HEK293 (cell line): ENCODE measurements at regions of chr19 and their contacts with region 1.

Region 1: DNA sequence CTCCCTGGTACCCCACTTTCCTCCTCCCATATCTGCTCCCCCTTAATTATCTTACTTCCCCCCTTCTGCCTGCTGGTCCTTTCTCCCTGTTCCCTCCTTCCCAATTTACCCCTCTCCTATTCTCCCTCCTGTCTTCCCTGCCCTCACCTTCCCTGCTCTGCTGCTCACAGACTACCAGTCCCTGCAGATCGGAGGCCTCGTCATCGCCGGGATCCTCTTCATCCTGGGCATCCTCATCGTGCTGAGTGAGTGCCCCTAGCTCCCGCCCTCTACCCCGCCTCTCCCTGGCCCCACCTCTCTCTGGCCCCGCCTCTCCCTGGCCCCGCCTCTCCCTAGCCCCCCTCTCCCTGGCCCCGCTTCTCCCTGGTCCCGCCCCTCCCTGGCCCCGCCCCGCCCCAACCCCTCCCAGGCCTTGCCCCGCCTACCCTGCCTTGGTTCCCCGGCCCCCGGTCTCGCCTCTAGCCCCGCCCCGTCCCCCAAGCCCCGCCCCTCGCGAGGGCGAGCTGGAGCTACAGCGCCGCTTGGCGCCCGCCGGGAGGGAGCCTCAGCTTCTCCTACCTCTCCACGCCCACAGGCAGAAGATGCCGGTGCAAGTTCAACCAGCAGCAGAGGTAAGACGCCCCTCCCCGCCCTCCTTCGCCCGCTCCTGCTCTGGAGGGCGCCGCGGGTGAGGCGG is 2.0 kb upstream of the FXYD7 start:
- H3K4me3 ChIP-seq: no peak overlapping the region
- H3K27ac ChIP-seq: no peak overlapping the region
- H3K4me1 ChIP-seq: peaks cover 31% of the 10 kb centered on the region
- CTCF ChIP-seq: peak; percentile 90

Region 2: GRCh38 chr19:35090506-35091237 is 50.4 kb before region 1 on chr19:
- CTCF ChIA-PET with region 1: interaction called, 37 read pairs
- POLR2A ChIA-PET with region 1: no interaction called
- H3K4me3 ChIP-seq: no peak overlapping the region
- H3K27ac ChIP-seq: no peak overlapping the region; the same call in 1 of the 2 replicates
- H3K4me1 ChIP-seq: peaks cover 7% of the 10 kb centered on the region
- CTCF ChIP-seq: peak; percentile 86

Region 3: GRCh38 chr19:35124098-35125060 is 16.7 kb before region 1 on chr19:
- CTCF ChIA-PET with region 1: interaction called, 101 read pairs
- POLR2A ChIA-PET with region 1: interaction called, 21 read pairs
- H3K4me3 ChIP-seq: peak overlapping the region; percentile 40
- H3K27ac ChIP-seq: peak overlapping the region; percentile 7; the same call in 1 of the 2 replicates
- H3K4me1 ChIP-seq: peaks cover 10% of the 10 kb centered on the region
- CTCF ChIP-seq: no peak

Region 4: GRCh38 chr19:35177377-35178274 is 36.5 kb after region 1 on chr19:
- CTCF ChIA-PET with region 1: interaction called, 32 read pairs
- POLR2A ChIA-PET with region 1: no interaction called
- H3K4me3 ChIP-seq: no peak overlapping the region
- H3K27ac ChIP-seq: no peak overlapping the region
- H3K4me1 ChIP-seq: no peaks in the 10 kb centered on the region
- CTCF ChIP-seq: no peak

Region 5: DNA sequence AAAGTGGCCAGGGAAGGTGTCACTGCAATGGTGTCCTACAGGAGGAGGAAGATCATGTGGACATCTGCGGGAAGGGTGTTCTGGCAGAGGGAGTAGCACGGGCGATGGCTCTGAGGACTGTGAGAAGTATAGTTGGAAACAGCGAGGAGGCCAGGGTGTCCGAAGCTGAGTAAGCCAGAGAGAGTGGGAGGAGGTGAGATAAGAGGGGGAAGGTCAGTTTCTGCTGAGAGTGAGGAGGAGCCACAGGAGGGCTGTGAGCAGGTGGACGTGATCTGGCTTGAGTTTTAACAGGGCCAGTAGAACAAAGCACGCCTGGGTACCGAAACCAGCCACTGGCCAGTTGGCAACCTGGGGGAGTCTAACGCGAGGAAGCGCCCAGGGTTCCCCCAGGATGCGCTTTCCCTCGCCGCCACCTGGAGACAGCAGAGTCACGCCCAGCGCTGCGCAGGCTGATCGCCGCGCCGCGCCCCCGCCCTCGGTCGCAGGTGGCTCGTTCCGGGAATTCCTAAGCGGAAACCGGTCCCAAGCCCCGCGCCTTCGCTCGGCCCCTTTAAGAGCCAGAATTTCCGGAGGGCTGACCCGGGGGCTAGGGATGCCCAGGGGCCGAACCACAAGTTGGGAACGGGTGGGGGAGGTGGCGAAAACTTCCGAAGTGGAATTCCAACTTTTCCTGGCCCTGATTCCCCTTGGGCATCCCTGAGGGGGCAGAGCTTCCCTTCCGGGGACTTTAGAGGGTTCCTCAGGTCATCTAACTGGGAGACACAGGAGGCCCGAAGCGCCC is 106.6 kb after region 1 on chr19:
- CTCF ChIA-PET with region 1: interaction called, 16 read pairs
- POLR2A ChIA-PET with region 1: interaction called, 6 read pairs
- H3K4me3 ChIP-seq: peak overlapping the region; percentile 63
- H3K27ac ChIP-seq: peak overlapping the region; percentile 98
- H3K4me1 ChIP-seq: peaks cover 9% of the 10 kb centered on the region
- CTCF ChIP-seq: peak; percentile 95